HepG2 (cell line): ENCODE measurements at regions of chr15 and their contacts with region 1.

Region 1: GRCh38 chr15:97684249-97684648 is 276.3 kb upstream of the ARRDC4 start:
- DNase-seq: no peak
- ATAC-seq: no peak
- H3K4me3 ChIP-seq: no peak overlapping the region
- H3K27ac ChIP-seq: no peak overlapping the region
- H3K4me1 ChIP-seq: no peaks in the 10 kb centered on the region
- H3K27me3 ChIP-seq: no peaks in the 10 kb centered on the region; a peak in 1 of 5 replicates
- CTCF ChIP-seq: no peak
- EP300 ChIP-seq: no peak
- POLR2A ChIP-seq: no peak
- RAD21 ChIP-seq: no peak

Region 2: GRCh38 chr15:97552548-97552947 is 131.7 kb before region 1 on chr15:
- CTCF ChIA-PET with region 1: no interaction called
- POLR2A ChIA-PET with region 1: no interaction called
- in situ Hi-C with region 1: no loop called
- intact Hi-C with region 1: no loop called
- DNase-seq: no peak
- ATAC-seq: no peak
- H3K4me3 ChIP-seq: no peak overlapping the region
- H3K27ac ChIP-seq: no peak overlapping the region
- H3K4me1 ChIP-seq: no peaks in the 10 kb centered on the region
- H3K27me3 ChIP-seq: no peaks in the 10 kb centered on the region
- CTCF ChIP-seq: no peak
- EP300 ChIP-seq: no peak
- POLR2A ChIP-seq: no peak
- RAD21 ChIP-seq: no peak

Region 3: DNA sequence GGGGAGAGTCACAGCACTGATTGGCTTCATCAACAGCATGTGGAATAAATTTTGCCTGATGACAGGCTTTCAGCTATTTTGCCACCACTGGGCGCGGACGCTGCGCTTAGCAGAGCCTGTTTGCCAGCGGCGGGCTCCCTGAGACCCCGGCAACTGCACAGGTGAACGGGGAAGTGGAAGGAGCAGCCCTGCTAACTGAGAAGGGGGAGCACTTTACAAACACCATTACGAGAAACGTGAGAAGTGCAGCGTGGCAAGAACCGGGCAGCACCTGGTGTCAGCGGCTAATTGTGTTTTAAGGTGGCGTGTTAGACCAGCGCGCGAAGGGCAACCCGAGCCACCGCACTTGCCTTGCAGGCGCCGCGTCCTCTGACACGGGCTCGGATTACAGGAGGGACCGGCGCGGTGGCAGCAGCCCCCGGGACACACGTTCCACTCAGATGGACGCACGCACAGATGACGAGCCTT is 31.5 kb before region 1 on chr15:
- CTCF ChIA-PET with region 1: no interaction called
- POLR2A ChIA-PET with region 1: no interaction called
- in situ Hi-C with region 1: no loop called
- intact Hi-C with region 1: loop called (anchors 1 kb)
- DNase-seq: no peak
- ATAC-seq: peak; percentile 49
- H3K4me3 ChIP-seq: no peak overlapping the region
- H3K27ac ChIP-seq: no peak overlapping the region
- H3K4me1 ChIP-seq: no peaks in the 10 kb centered on the region
- H3K27me3 ChIP-seq: no peaks in the 10 kb centered on the region
- CTCF ChIP-seq: no peak
- EP300 ChIP-seq: no peak
- POLR2A ChIP-seq: no peak
- RAD21 ChIP-seq: no peak

Region 4: DNA sequence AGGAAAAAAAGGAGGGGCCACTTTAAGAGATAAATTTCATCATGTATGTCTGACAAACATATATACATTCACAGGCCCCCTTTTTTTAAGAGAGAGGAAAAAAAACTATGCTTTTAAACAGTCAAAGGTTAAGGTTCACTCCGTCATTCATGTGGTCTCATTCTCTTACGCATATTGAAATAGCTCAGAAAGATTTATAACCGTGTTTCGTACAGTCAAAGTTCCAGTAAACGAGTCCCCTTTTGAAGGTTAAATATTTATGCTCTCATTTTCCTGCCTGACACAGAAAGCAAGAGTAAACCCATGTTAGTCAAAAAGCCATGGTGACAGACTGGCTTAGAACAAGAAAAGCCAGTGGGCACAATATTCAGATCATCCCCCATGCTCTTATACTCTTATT is 28.3 kb after region 1 on chr15:
- CTCF ChIA-PET with region 1: no interaction called
- POLR2A ChIA-PET with region 1: no interaction called
- in situ Hi-C with region 1: no loop called
- intact Hi-C with region 1: no loop called
- DNase-seq: no peak
- ATAC-seq: no peak
- H3K4me3 ChIP-seq: no peak overlapping the region
- H3K27ac ChIP-seq: no peak overlapping the region
- H3K4me1 ChIP-seq: no peaks in the 10 kb centered on the region
- H3K27me3 ChIP-seq: no peaks in the 10 kb centered on the region; a peak in 1 of 5 replicates
- CTCF ChIP-seq: no peak
- EP300 ChIP-seq: no peak
- POLR2A ChIP-seq: no peak
- RAD21 ChIP-seq: no peak